Ovary (tissue), 10 donors: ENCODE measurements at regions of chr17 and their contacts with region 1.

Region 1: DNA sequence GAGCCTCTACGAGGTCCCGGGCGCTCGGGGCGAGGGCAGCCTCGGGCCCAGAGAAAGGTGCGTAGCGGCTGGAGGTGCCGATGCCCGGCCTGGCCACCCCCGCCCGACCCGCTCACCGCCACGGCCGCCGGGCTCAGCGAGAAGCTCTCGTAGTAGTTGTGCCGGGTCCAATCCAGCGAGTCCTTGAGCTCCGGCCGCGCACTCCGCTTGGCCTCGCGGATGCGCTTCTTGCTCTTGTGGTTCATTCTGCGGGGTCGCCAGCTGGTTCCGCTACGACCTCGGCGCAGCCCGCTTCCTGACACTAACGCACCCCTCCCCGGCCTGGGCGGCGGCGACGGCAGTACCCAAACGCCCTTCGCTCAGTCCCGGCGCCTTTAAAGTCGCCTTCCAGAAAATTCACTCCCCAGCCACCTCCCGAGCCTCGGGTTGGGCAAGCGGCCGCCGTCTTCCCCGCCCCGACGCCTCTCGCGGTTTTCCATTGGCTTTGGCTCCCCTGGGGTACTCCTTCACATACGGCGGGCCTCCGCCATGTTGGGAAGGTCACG is at the start of gene JMJD6:
- DNase-seq: peak; percentile 95 to 97 (median 96)
- H3K4me3 ChIP-seq: peak within 1 kb of the TSS; percentile 95
- H3K27ac ChIP-seq: peak within 1 kb of the TSS; percentile 86 to 97
- H3K4me1 ChIP-seq: peaks cover 8% of the 10 kb centered on the region
- H3K27me3 ChIP-seq: no peaks in the 10 kb centered on the region
- CTCF ChIP-seq: no peak
- EP300 ChIP-seq: peak; percentile 29
- POLR2A ChIP-seq: peak; percentile 71
- total RNA-seq, gene JMJD6: 20.1 to 49.8 (median 38.1) TPM

Region 2: GRCh38 chr17:76671123-76671911 is 55.0 kb before region 1 on chr17:
- intact Hi-C with region 1: loop called in 1 of 4 experiments (anchors 10 kb)
- DNase-seq: peak; percentile 99 to 100 (median 99)
- H3K4me3 ChIP-seq: peak overlapping the region; percentile 77
- H3K27ac ChIP-seq: peak overlapping the region; percentile 46 to 73
- H3K4me1 ChIP-seq: peaks cover 12% of the 10 kb centered on the region
- H3K27me3 ChIP-seq: no peaks in the 10 kb centered on the region
- CTCF ChIP-seq: no peak
- EP300 ChIP-seq: no peak
- POLR2A ChIP-seq: peak; percentile 23